ENCODE measurements at regions of chr19 and their contacts with region 1.

Region 1: GRCh38 chr19:8396563-8397203 is 6.5 kb downstream of the RAB11B start:
- DNase-seq: peak; percentile 79 to 90 (median 87)
- ATAC-seq: peak; percentile 38 to 55
- H3K4me3 ChIP-seq: no peak overlapping the region
- H3K27ac ChIP-seq: no peak overlapping the region
- H3K4me1 ChIP-seq: peaks cover 24% of the 10 kb centered on the region
- H3K27me3 ChIP-seq: no peaks in the 10 kb centered on the region

Region 2: GRCh38 chr19:8363803-8364771 is 32.6 kb before region 1 on chr19 and contains the start of gene ANGPTL4:
- intact Hi-C with region 1: loop called in 2 of 4 experiments (anchors 5 kb)
- DNase-seq: peak; percentile 90 to 93 (median 91)
- ATAC-seq: peak; percentile 70 to 79
- H3K4me3 ChIP-seq: peak within 1 kb of the TSS; percentile 80
- H3K27ac ChIP-seq: peak within 1 kb of the TSS; percentile 99
- H3K4me1 ChIP-seq: peaks cover 18% of the 10 kb centered on the region
- H3K27me3 ChIP-seq: no peaks in the 10 kb centered on the region
- total RNA-seq, gene ANGPTL4: 5.9 to 89.3 (median 7.8) TPM

Region 3: DNA sequence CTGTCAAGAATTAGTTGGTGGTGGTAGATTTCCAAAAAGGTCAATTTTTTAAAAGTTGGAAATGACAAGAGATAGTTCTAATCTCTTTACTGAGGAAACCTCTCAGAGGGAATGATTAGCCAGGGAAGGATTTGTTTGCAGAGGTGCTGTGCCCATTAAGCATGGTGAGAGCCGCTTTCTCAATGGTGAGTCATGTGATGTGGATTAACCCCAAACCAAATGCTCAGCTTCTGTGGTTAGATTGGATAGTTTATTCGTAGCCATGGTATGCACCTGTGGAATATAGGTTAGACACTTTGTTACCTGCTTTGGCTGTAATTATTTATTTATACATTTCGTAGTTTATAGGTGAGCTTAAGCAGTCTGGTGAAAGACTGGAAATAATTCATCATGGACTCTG is 55.2 kb after region 1 on chr19:
- intact Hi-C with region 1: no loop called
- DNase-seq: no peak
- ATAC-seq: no peak
- H3K4me3 ChIP-seq: no peak overlapping the region
- H3K27ac ChIP-seq: no peak overlapping the region
- H3K4me1 ChIP-seq: peaks cover 18% of the 10 kb centered on the region
- H3K27me3 ChIP-seq: no peaks in the 10 kb centered on the region